Right ventricle myocardium inferior (tissue), 1 donor: ENCODE measurements at regions of chr2 and their contacts with region 1.

Region 1: DNA sequence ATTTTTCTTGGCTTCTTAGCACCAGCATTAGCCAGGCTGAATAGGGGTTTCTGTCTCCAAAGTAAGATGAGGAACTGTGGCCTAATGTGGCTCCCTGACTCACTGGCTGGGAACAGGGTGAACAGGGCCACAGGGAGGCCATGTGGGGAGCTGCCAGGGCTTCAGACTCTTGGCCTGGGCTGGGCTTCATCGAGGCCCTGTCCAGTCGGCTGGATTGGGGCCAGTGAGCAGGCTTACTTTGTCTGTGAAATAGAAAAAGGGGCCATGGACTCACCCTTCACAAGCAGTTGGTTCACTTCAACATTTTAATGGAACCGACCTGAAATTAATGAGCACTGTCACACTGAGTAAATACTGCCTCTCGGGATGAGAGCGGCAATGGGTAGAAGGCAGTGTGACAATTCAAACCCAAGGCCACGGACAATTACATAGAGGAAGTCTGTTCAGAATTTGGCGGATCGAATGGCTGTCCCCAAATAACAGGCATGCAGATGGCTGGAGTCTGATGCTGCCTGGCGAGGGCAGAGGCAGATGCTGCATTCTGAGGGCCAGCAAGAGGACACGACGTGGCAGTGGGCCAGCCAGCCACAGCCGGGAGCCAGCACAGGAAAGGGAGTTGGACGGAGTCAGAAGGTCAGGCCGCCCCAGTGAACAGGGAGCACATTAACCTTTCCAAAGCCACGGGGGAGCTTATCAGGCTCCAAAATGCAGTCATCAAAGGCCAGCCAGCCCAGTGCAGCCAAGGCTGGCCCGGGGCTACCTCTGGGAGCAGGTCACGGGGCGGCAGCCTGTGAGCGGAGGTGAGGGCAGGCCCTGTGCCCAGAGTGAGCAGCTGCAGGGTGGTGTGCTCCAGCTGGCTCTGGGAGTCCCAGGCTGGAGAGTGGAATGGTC is 146.6 kb upstream of the REV1 start:
- DNase-seq: peak; percentile 93
- ATAC-seq: peak; percentile 96

Region 2: DNA sequence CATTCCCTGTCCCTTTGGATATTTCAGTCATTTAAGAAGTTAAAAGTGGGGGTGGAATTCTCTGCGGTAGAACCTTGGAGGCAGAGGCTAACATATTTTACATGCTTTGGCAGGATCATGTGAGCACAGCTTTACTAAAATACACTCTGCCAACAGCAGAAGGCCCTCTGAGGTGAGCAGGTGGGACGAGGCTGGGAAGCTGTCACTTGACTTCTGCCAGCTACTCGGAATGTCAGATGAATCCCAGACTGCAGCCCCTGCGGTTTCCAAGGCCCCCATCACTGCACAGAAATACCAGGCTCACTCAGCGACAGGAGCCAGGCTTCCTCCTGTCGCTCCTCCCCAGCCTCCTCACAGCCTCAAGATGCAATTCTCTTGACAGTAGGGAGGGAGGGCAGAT is 74.3 kb after region 1 on chr2:
- intact Hi-C with region 1: loop called (anchors 5 kb)
- DNase-seq: no peak
- ATAC-seq: peak; percentile 53